H1 (cell line): ENCODE measurements at regions of chr2 and their contacts with region 1.

Region 1: GRCh38 chr2:110874453-110875383 is 142.3 kb downstream of the ACOXL start:
- DNase-seq: no peak
- H3K4me3 ChIP-seq: no peak overlapping the region
- H3K27ac ChIP-seq: no peak overlapping the region
- H3K4me1 ChIP-seq: peaks cover 0 to 12% (median 3%) of the 10 kb centered on the region in 4 experiments; a peak in 3 of 7 replicates
- H3K27me3 ChIP-seq: no peaks in the 10 kb centered on the region
- CTCF ChIP-seq: no peak
- EP300 ChIP-seq: no peak
- POLR2A ChIP-seq: no peak
- RAD21 ChIP-seq: no peak

Region 2: GRCh38 chr2:110707386-110707965 is 167.2 kb before region 1 on chr2:
- CTCF ChIA-PET with region 1: no interaction called
- POLR2A ChIA-PET with region 1: no interaction called
- DNase-seq: no peak
- H3K4me3 ChIP-seq: no peak overlapping the region
- H3K27ac ChIP-seq: no peak overlapping the region
- H3K4me1 ChIP-seq: no peaks in the 10 kb centered on the region
- H3K27me3 ChIP-seq: no peaks in the 10 kb centered on the region
- CTCF ChIP-seq: no peak
- EP300 ChIP-seq: no peak
- POLR2A ChIP-seq: no peak
- RAD21 ChIP-seq: no peak

Region 3: GRCh38 chr2:110886826-110887573 is 12.3 kb after region 1 on chr2:
- CTCF ChIA-PET with region 1: interaction called, 26 read pairs
- POLR2A ChIA-PET with region 1: no interaction called
- DNase-seq: no peak
- H3K4me3 ChIP-seq: no peak overlapping the region
- H3K27ac ChIP-seq: no peak overlapping the region
- H3K4me1 ChIP-seq: no peaks in the 10 kb centered on the region
- H3K27me3 ChIP-seq: no peaks in the 10 kb centered on the region
- CTCF ChIP-seq: peak; percentile 42 to 59 (median 45)
- EP300 ChIP-seq: no peak
- POLR2A ChIP-seq: no peak
- RAD21 ChIP-seq: peak; percentile 34 to 55

Region 4: DNA sequence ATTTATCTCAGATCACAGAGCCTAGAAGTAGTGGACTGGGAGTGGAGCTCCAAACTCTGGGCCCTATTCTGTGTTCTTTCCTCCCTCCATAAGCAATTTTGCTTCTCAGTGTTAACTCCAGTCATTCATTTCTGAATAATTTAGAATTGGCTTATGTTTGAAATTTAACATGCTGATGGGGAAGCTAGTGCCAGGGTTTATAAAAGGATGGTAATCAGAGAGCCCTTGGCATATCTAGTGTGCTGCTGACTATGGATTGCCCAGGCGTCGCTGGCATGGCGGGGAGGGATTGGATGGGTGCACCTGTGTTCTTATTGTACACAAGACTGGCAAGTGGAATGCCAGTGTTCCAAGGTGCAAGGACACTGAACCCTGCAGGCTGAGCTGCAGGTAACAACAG is 34.8 kb after region 1 on chr2:
- CTCF ChIA-PET with region 1: no interaction called
- POLR2A ChIA-PET with region 1: no interaction called
- DNase-seq: no peak
- H3K4me3 ChIP-seq: no peak overlapping the region
- H3K27ac ChIP-seq: no peak overlapping the region
- H3K4me1 ChIP-seq: peaks cover 2 to 7% (median 3%) of the 10 kb centered on the region in 4 experiments; a peak in 5 of 7 replicates
- H3K27me3 ChIP-seq: no peaks in the 10 kb centered on the region
- CTCF ChIP-seq: no peak
- EP300 ChIP-seq: no peak
- POLR2A ChIP-seq: no peak
- RAD21 ChIP-seq: no peak

Region 5: DNA sequence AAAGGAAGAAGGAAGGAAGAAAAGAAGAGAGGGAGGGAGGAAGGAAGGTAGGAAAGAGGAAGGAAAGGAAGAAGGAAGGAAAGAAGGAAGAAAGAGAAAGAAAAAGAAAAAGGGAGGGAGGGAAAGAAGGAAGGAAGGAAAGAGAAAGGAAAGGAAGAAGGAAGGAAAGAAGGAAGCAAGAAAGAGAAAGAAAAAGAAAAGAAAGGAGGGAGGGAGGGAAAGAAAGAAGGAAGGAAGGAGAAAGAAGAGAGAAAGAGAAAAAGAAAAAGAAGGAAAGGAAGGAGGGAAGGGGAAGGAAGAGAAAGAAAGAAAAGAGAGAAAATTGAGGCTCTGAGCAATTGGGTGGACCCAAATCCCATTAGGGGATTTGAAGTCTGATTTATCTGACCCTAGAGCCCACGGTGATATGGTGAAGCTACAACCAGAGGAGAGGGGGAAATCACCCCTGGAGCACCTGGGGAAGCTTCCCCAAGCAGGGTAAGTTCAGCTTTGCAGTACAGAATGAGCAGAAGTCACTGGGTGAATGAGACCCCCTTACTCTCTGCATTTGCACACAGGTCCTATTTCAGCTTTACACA is 68.4 kb after region 1 on chr2:
- CTCF ChIA-PET with region 1: interaction called, 10 read pairs
- POLR2A ChIA-PET with region 1: no interaction called
- DNase-seq: no peak
- H3K4me3 ChIP-seq: no peak overlapping the region
- H3K27ac ChIP-seq: no peak overlapping the region
- H3K4me1 ChIP-seq: no peaks in the 10 kb centered on the region
- H3K27me3 ChIP-seq: no peaks in the 10 kb centered on the region
- CTCF ChIP-seq: no peak
- EP300 ChIP-seq: no peak
- POLR2A ChIP-seq: no peak
- RAD21 ChIP-seq: no peak